ENCODE measurements at regions of chr15 and their contacts with region 1.

Region 1: GRCh38 chr15:41283653-41284426 is 48.6 kb downstream of the OIP5 start:
- DNase-seq: peak; percentile 98
- ATAC-seq: peak; percentile 98
- H3K4me3 Mint-ChIP-seq: peak overlapping the region; percentile 90
- H3K27ac Mint-ChIP-seq: peak overlapping the region; percentile 95
- H3K4me1 Mint-ChIP-seq: peaks cover 42% of the 10 kb centered on the region
- H3K27me3 Mint-ChIP-seq: no peaks in the 10 kb centered on the region

Region 2: DNA sequence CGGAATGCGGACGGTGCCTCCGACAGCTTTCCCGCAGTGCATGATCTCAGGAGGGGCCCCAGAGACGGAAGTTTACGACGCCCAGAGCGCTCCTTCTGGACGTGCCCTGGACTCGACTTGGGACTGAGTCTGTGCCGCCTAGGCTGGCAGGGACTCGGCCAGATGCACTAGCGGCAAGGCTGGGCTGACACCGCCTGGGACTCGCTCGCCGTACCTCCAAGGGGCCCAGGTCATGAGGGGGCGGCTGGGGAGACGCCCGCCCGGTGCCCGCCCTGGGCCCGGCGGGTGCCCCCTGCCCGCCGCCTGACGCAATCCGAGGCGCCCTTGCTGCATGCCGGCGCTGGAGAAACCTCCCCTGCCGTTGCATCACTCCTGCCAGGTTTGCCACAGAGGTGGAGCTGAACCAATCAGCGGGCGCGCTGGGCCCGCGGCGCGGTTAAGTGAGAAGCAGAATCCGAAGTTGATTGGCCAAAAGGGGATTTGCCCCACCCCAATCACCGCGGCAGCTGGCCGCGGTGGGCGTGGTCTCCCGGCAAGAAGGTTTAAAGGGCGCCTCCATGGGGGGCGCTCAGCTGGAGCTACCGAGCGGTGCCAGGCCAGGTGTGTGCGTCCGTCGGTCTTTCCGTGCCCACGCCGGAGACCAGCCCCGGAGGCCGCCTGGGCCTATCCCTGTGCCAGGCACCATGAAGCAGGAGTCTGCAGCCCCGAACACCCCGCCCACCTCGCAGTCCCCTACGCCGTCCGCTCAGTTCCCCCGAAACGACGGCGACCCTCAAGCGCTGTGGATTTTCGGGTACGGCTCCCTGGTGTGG is 330.7 kb before region 1 on chr15 and contains the start of gene CHAC1:
- CTCF ChIA-PET with region 1: no interaction called
- POLR2A ChIA-PET with region 1: no interaction called
- intact Hi-C with region 1: loop called in 1 of 2 experiments (anchors 1 kb)
- DNase-seq: peak; percentile 99
- ATAC-seq: peak; percentile 92
- H3K4me3 Mint-ChIP-seq: peak within 1 kb of the TSS; percentile 93
- H3K27ac Mint-ChIP-seq: peak within 1 kb of the TSS; percentile 97
- H3K4me1 Mint-ChIP-seq: peaks cover 25% of the 10 kb centered on the region
- H3K27me3 Mint-ChIP-seq: peaks cover 2% of the 10 kb centered on the region
- total RNA-seq, gene CHAC1: 31.1 to 32.2 TPM

Region 3: DNA sequence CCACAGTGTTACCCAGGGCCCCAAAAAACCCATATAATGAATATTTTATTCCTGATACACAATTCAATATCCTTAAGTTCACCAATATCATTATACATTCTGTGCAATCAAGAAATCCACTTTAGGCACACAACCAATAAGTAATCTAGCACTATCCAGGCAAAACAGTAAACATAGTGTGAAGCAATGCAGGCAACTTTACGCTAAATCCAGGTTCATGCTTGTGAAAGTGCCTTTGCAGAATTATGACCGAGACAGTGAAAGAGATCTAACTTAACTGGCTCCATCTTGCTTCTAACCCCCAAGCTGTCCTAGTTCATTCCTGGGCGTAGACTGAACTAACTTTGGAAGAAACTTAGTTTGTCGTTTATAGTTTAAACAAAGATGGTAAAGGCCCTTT is 133.6 kb before region 1 on chr15:
- CTCF ChIA-PET with region 1: no interaction called
- POLR2A ChIA-PET with region 1: no interaction called
- intact Hi-C with region 1: loop called in 1 of 2 experiments (anchors 1 kb)
- DNase-seq: no peak
- ATAC-seq: no peak
- H3K4me3 Mint-ChIP-seq: no peak overlapping the region
- H3K27ac Mint-ChIP-seq: no peak overlapping the region
- H3K4me1 Mint-ChIP-seq: peaks cover 16% of the 10 kb centered on the region
- H3K27me3 Mint-ChIP-seq: no peaks in the 10 kb centered on the region

Region 4: GRCh38 chr15:41263891-41264351 is 19.9 kb before region 1 on chr15:
- CTCF ChIA-PET with region 1: no interaction called
- POLR2A ChIA-PET with region 1: no interaction called
- intact Hi-C with region 1: no loop called
- DNase-seq: no peak
- ATAC-seq: no peak
- H3K4me3 Mint-ChIP-seq: no peak overlapping the region
- H3K27ac Mint-ChIP-seq: no peak overlapping the region
- H3K4me1 Mint-ChIP-seq: no peaks in the 10 kb centered on the region
- H3K27me3 Mint-ChIP-seq: no peaks in the 10 kb centered on the region

Region 5: DNA sequence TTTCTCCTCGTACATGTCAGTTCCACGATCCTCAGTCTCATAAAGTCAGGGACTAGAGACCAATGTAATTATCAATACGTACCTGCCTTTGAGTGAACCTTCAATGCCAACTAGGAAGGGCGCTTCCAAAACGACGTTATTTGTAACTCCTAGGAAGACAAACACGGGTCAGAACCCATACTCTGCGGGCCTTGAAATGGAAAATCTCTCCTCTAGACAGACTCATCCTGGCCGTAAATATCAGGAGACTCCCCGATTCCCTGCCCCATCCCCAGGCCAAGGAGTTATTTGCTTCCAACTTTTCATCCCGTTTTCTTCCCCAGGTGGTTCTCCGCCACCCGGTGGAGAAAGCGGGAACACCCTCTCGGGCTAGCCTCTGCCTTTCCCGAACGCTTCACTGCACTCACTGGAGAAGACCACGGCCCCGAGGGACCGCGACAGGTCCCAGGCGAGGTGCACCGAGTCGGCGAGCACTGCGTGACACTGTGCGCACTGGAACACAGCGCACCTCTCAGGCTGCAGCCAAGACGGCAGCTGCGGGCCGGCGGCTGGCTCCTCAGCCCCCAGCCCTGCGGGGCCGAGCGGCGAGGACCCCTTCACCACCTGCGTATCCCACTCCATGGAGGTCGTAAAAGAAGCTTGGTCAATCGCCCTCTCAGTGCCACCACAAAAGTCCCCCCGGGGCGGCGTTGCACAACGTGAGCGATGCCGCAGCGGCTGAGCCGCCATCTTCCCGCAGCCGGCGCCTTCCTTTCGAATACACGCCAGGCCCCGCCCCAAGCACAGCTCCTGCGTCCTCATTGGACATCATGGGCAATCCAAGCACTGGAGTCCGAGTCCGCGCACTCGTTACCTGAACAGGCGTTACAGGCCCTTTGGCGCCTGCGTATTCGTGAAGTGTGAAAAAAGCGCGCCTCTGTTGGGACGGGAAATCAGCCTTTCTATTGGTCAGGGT is 48.3 kb after region 1 on chr15 and contains the start of gene OIP5:
- CTCF ChIA-PET with region 1: interaction called, 3 read pairs
- POLR2A ChIA-PET with region 1: interaction called, 8 read pairs
- intact Hi-C with region 1: loop called (anchors 1 kb)
- DNase-seq: peak; percentile 99
- ATAC-seq: peak; percentile 98
- H3K4me3 Mint-ChIP-seq: peak within 1 kb of the TSS; percentile 91
- H3K27ac Mint-ChIP-seq: peak within 1 kb of the TSS; percentile 92
- H3K4me1 Mint-ChIP-seq: peaks cover 26% of the 10 kb centered on the region
- H3K27me3 Mint-ChIP-seq: no peaks in the 10 kb centered on the region
- total RNA-seq, gene OIP5: 11.5 to 14.0 TPM

Region 6: GRCh38 chr15:41350057-41350717 is 66.3 kb after region 1 on chr15:
- CTCF ChIA-PET with region 1: no interaction called
- POLR2A ChIA-PET with region 1: no interaction called
- intact Hi-C with region 1: no loop called
- DNase-seq: no peak
- ATAC-seq: no peak
- H3K4me3 Mint-ChIP-seq: no peak overlapping the region
- H3K27ac Mint-ChIP-seq: no peak overlapping the region
- H3K4me1 Mint-ChIP-seq: no peaks in the 10 kb centered on the region
- H3K27me3 Mint-ChIP-seq: no peaks in the 10 kb centered on the region

Region 7: DNA sequence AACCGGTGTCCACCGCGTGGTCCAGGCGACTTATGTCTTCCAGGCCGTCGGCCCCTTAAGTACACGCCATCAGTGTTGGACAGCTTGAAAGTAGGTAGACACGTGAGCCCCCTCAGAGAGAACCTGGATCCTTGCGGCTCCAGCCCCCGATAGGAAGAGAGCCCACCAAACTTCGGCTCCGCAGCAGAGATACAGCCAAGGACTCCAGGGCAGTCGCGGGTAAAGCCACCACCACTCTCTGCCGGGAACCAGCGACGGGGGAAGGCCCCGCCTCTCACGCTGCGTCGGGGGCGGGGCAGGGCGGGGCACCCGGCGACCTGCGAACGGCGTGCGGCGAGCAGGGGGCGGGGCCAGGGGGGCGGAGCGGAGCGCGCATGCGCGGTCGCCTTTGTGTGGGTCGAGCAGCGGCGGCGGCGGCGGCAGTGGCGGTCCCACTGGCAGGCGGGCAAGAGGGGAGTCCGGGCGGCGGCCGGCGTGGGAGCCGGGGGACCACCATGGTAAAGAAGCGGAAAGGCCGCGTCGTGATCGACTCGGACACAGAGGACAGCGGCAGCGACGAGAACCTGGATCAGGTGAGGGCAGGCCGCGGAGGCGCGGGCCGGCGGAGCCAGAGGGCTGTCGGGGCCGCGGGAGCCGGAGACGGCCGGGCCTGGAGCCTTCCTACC is 133.0 kb after region 1 on chr15 and contains the start of gene RTF1:
- CTCF ChIA-PET with region 1: no interaction called
- POLR2A ChIA-PET with region 1: no interaction called
- intact Hi-C with region 1: loop called in 1 of 2 experiments (anchors 1 kb)
- DNase-seq: peak; percentile 98
- ATAC-seq: peak; percentile 94
- H3K4me3 Mint-ChIP-seq: peak within 1 kb of the TSS; percentile 88
- H3K27ac Mint-ChIP-seq: peak within 1 kb of the TSS; percentile 92
- H3K4me1 Mint-ChIP-seq: peaks cover 38% of the 10 kb centered on the region
- H3K27me3 Mint-ChIP-seq: no peaks in the 10 kb centered on the region
- total RNA-seq, gene RTF1: 29.4 to 32.3 TPM

Region 8: GRCh38 chr15:41648770-41649169 is 364.9 kb after region 1 on chr15:
- CTCF ChIA-PET with region 1: no interaction called
- POLR2A ChIA-PET with region 1: no interaction called
- intact Hi-C with region 1: no loop called
- DNase-seq: no peak
- ATAC-seq: no peak
- H3K4me3 Mint-ChIP-seq: no peak overlapping the region
- H3K27ac Mint-ChIP-seq: no peak overlapping the region
- H3K4me1 Mint-ChIP-seq: no peaks in the 10 kb centered on the region
- H3K27me3 Mint-ChIP-seq: no peaks in the 10 kb centered on the region

Region 9: DNA sequence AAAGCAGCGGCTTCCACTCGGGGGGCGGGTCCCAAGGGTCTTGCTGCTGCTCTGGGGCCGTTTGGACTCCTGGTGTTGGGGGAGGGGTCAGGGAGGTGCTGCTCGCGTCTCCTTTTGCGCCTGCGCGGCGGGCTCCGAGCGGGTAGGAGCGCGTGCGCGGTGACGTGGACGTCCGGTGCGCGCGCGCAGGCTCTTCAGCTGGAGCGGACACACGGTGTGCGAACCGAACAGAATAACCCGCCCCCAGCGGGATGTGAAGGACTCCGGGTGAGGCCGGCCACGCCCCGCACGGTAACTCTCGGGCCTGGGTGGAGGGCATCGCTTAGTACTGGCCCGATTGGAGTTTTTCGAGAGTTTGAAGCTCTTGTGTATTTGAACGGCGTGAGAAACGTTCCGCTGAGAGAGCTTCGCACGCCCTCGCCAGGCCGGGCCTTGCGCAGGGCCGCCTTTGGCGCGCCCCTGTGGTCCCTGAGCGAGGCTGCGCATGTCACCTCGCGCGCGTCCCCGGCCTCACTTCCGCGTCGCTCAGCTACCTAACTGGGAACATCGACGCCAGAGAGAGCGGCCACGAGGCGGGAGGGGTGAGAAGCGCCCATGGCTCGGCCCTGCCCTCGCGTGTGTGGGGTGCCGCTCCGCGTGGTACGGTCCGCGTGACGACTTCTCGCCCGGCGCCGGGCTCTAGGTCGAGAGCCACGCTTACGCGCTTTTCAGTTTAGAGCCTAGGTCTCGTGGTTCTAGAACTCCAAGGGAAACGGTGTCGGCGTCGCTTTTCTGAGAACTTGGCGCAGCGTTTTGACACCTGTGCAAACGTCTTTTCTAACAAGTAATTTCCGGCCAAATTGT is 376.6 kb after region 1 on chr15 and contains the start of gene MGA:
- CTCF ChIA-PET with region 1: no interaction called
- POLR2A ChIA-PET with region 1: no interaction called
- intact Hi-C with region 1: loop called in 1 of 2 experiments (anchors 1 kb)
- DNase-seq: peak; percentile 94
- ATAC-seq: peak; percentile 89
- H3K4me3 Mint-ChIP-seq: peak within 1 kb of the TSS; percentile 92
- H3K27ac Mint-ChIP-seq: peak within 1 kb of the TSS; percentile 95
- H3K4me1 Mint-ChIP-seq: peaks cover 42% of the 10 kb centered on the region
- H3K27me3 Mint-ChIP-seq: peaks cover 7% of the 10 kb centered on the region
- total RNA-seq, gene MGA: 33.7 to 39.3 TPM

Measured in activated CD4-positive, alpha-beta T cell treated with anti-CD3 and anti-CD28 coated beads for 36 hours (primary cell).